Panc1 (cell line): ENCODE measurements at regions of chr17 and their contacts with region 1.

Region 1: GRCh38 chr17:79991140-79991923 is 44.3 kb downstream of the TBC1D16 start:
- DNase-seq: no peak
- ATAC-seq: peak; percentile 90
- H3K4me3 ChIP-seq: peak overlapping the region; percentile 32 to 63
- H3K27ac ChIP-seq: peak overlapping the region; percentile 64
- H3K4me1 ChIP-seq: peaks cover 72% of the 10 kb centered on the region
- H3K27me3 ChIP-seq: no peaks in the 10 kb centered on the region
- CTCF ChIP-seq: no peak; the same call in 1 of the 2 replicates

Region 2: GRCh38 chr17:79789534-79790353 is 201.6 kb before region 1 on chr17:
- CTCF ChIA-PET with region 1: interaction called, 3 read pairs
- POLR2A ChIA-PET with region 1: no interaction called
- in situ Hi-C with region 1: loop called (anchors 25 kb)
- intact Hi-C with region 1: loop called (anchors 5 kb)
- DNase-seq: no peak
- ATAC-seq: peak; percentile 56
- H3K4me3 ChIP-seq: peak overlapping the region; percentile 8 to 35; a peak in 3 of 4 replicates
- H3K27ac ChIP-seq: 0 out of 2 replicates have a peak overlapping the region, but pooled peaks have one; percentile 30
- H3K4me1 ChIP-seq: peaks cover 15% of the 10 kb centered on the region
- H3K27me3 ChIP-seq: no peaks in the 10 kb centered on the region
- CTCF ChIP-seq: peak; percentile 99

Region 3: GRCh38 chr17:79796763-79797491 is 194.4 kb before region 1 on chr17 and contains the start of gene CBX8:
- CTCF ChIA-PET with region 1: interaction called, 4 read pairs
- POLR2A ChIA-PET with region 1: no interaction called
- in situ Hi-C with region 1: loop called (anchors 25 kb)
- intact Hi-C with region 1: loop called (anchors 5 kb)
- DNase-seq: peak; percentile 91
- ATAC-seq: peak; percentile 81
- H3K4me3 ChIP-seq: peak within 1 kb of the TSS; percentile 82 to 91
- H3K27ac ChIP-seq: peak within 1 kb of the TSS; percentile 75
- H3K4me1 ChIP-seq: peaks cover 47% of the 10 kb centered on the region
- H3K27me3 ChIP-seq: no peaks in the 10 kb centered on the region
- CTCF ChIP-seq: no peak
- total RNA-seq, gene CBX8: 15.3 TPM

Region 4: DNA sequence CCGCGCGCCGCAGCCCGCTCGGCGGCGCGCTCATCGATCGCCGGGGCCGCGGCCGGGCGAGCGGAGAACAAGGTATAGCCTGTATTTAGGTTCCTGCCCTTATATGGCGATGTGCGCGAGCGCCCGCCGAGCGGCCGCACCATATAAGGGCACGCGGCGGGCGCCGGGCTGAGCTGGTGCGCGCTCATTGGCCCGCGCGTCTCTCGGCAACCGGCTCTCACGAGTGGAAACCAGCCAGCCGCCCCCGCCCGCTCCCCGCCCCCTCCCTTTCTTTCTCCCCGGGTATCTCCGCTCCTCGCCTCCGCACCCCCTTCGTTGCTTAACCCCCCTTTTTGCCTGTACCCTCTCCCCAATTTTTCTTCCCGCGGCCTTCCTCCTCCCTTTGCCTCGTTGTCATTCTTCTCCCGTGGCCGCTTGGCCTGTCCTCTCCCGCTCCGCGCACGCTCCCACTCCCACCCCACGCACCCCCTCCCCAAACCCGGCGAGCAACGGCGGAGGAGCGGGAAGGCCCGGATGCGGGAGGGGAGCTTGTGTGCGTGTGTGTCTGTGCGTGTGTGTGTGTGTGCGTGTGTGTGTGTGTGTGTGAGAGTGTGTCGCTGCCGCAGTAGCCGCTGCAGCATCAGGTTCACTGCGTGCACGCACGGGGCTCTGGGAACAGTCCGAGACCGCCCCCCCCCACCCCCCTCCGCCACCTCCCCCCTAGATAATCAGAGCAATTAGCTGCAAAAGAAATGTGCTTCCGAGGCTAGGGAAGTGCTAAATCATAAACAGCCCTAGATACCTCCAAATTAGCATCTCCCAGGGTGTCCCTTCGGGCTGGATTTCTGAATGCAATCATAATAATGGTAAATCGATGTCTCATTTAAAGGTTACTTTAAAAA is 181.0 kb before region 1 on chr17:
- CTCF ChIA-PET with region 1: interaction called, 4 read pairs
- POLR2A ChIA-PET with region 1: no interaction called
- in situ Hi-C with region 1: no loop called
- intact Hi-C with region 1: loop called (anchors 5 kb)
- DNase-seq: no peak
- ATAC-seq: peak; percentile 79
- H3K4me3 ChIP-seq: peak overlapping the region; percentile 43 to 46
- H3K27ac ChIP-seq: no peak overlapping the region
- H3K4me1 ChIP-seq: peaks cover 28% of the 10 kb centered on the region
- H3K27me3 ChIP-seq: no peaks in the 10 kb centered on the region
- CTCF ChIP-seq: no peak

Region 5: DNA sequence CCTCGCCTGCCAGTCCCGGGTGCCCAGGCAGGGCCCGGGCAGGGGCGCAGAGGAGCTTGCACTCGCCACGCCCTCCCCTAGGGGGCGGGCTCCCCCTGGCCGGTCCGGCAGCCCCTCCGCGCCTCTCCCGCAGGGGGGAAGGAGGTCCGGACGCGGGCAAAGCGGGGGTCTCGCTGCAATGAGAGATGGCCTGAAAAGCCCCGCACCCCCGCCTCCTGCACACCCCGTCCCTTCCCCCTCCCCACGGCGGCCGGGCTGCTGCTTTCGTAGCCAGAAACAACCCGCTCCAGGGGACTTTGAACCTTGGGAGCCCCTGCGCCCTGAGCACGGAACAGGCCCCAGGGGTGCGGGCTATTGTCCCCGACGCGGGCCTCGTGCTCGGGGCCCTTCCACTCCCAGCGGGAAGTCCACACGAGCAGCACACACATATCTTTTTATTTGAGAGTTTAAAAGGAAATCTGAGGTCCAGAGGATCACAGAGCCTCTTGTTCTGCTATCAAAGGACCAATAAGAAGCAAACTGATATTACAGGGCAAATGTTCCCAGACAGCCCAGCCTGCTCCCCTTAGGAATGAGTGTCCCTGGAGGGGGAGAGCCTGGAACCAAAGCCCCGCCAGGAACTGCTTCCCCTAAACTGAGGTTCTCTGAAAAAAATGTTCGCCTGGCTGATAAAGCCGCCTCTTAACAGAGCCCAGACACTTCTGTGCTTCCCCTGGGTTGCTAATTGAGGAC is 146.3 kb before region 1 on chr17:
- CTCF ChIA-PET with region 1: interaction called, 12 read pairs
- POLR2A ChIA-PET with region 1: interaction called, 4 read pairs
- in situ Hi-C with region 1: loop called (anchors 25 kb)
- intact Hi-C with region 1: no loop called
- DNase-seq: no peak
- ATAC-seq: peak; percentile 65
- H3K4me3 ChIP-seq: peak overlapping the region; percentile 24 to 64
- H3K27ac ChIP-seq: peak overlapping the region; percentile 64
- H3K4me1 ChIP-seq: peaks cover 25% of the 10 kb centered on the region
- H3K27me3 ChIP-seq: no peaks in the 10 kb centered on the region
- CTCF ChIP-seq: peak; percentile 96

Region 6: DNA sequence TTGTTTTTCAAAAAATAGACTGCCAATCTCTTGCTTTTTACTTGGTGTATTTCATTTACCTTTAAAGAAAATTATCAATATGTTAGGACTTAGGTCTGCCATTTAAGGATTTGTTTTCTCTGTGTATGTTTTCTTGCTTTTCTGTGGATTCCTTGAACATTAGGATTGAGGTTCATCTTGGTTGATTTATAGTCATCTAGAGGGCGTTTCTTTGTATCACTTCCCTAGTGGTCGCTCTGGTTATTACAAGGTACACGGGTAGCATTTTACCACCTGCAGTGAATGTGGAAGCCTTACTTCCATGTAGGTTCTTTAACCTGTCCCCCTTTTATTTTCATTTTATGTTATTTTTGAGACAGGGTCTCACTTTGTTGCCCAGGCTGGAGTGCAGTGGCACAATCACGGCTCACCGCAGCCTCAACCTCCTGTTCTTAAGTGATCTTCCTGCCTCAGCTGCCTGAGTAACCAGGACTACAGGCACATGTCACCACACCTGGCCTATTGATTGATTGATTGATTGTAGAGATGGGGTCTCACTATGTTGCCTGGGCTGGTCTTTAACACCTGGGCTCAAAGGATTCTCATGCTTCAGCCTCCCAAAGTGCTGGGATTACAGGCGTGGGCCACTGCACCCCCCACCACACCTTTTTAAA is 116.9 kb before region 1 on chr17:
- CTCF ChIA-PET with region 1: no interaction called
- POLR2A ChIA-PET with region 1: no interaction called
- in situ Hi-C with region 1: loop called (anchors 25 kb)
- intact Hi-C with region 1: no loop called
- DNase-seq: no peak
- ATAC-seq: peak; percentile 83
- H3K4me3 ChIP-seq: no peak overlapping the region
- H3K27ac ChIP-seq: no peak overlapping the region
- H3K4me1 ChIP-seq: no peaks in the 10 kb centered on the region
- H3K27me3 ChIP-seq: no peaks in the 10 kb centered on the region
- CTCF ChIP-seq: peak; percentile 45

Region 7: GRCh38 chr17:80082403-80083135 is 91.2 kb after region 1 on chr17:
- CTCF ChIA-PET with region 1: no interaction called
- POLR2A ChIA-PET with region 1: no interaction called
- in situ Hi-C with region 1: no loop called
- intact Hi-C with region 1: no loop called
- DNase-seq: no peak
- ATAC-seq: peak; percentile 82
- H3K4me3 ChIP-seq: peak overlapping the region; percentile 0 to 41; a peak in 2 of 4 replicates
- H3K27ac ChIP-seq: peak overlapping the region; percentile 66
- H3K4me1 ChIP-seq: 0 out of 2 replicates have a peak, but pooled peaks cover 6% of the 10 kb centered on the region
- H3K27me3 ChIP-seq: no peaks in the 10 kb centered on the region
- CTCF ChIP-seq: peak; percentile 94